Activated CD4-positive, alpha-beta memory T cell treated with anti-CD3 and anti-CD28 coated beads, Interleukin-2, amount 10 ng/mL, durations not matched to agents 7 days and 5 days (primary cell): ENCODE measurements at regions of chr15 and their contacts with region 1.

Region 1: GRCh38 chr15:101188637-101189408 is 63.0 kb downstream of the CHSY1 start:
- DNase-seq: no peak
- H3K4me3 Mint-ChIP-seq: peak overlapping the region; percentile 43
- H3K27ac Mint-ChIP-seq: peak overlapping the region; percentile 74
- H3K4me1 Mint-ChIP-seq: peaks cover 81% of the 10 kb centered on the region
- H3K27me3 Mint-ChIP-seq: no peaks in the 10 kb centered on the region

Region 2: GRCh38 chr15:101105059-101105891 is 83.5 kb before region 1 on chr15:
- CTCF ChIA-PET with region 1: no interaction called
- POLR2A ChIA-PET with region 1: no interaction called
- DNase-seq: no peak
- H3K4me3 Mint-ChIP-seq: no peak overlapping the region
- H3K27ac Mint-ChIP-seq: no peak overlapping the region
- H3K4me1 Mint-ChIP-seq: peaks cover 2% of the 10 kb centered on the region
- H3K27me3 Mint-ChIP-seq: peaks cover 2% of the 10 kb centered on the region

Region 3: DNA sequence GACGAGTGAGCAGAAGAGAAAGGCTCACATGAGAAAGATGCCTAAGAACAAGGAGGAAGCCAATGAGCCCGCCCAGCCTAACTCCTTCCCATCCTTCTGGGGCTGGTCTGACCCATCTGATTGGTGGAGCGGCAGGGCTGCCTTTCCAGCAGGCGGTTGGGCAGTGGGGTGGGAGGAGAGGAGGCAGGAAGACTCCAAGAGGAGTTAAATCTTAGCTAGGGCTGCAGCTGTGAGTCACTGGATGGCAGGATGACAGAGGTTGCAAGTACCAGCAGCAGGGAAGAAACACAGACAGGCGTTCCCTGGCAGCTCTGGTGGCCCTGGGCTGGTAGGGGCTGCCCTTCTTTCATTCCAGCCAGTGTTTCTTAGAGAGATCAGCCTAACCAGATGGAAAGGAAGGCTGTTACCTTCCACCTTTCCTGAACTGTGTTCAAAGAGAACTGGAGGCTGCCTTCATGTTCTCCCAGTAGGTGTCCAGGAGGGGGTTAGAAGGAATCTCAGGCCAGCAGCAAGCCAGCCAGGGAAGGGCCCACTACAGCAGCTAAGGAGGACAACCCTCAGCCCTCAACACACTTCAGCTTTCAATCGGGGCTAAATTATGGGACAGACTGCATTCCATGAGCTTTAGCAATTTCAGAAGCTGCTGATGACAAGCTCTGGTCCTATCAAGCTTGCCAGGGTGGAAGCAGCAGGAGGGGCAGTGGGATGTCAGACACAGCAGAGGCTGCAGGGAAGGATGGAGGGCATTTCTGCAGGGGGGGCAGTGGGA is 12.8 kb after region 1 on chr15:
- CTCF ChIA-PET with region 1: interaction called, 5 read pairs
- POLR2A ChIA-PET with region 1: interaction called, 42 read pairs
- DNase-seq: peak; percentile 36
- H3K4me3 Mint-ChIP-seq: no peak overlapping the region
- H3K27ac Mint-ChIP-seq: peak overlapping the region; percentile 99
- H3K4me1 Mint-ChIP-seq: peaks cover 89% of the 10 kb centered on the region
- H3K27me3 Mint-ChIP-seq: no peaks in the 10 kb centered on the region